Endothelial cell of umbilical vein (primary cell): ENCODE measurements at regions of chr4 and their contacts with region 1.

Region 1: GRCh38 chr4:185358514-185358913 is 37.2 kb downstream of the LRP2BP start:
- DNase-seq: peak; percentile 92
- H3K4me3 ChIP-seq: no peak overlapping the region
- H3K27ac ChIP-seq: peak overlapping the region; percentile 100
- H3K4me1 ChIP-seq: peaks cover 31% of the 10 kb centered on the region
- H3K27me3 ChIP-seq: no peaks in the 10 kb centered on the region
- CTCF ChIP-seq: no peak
- POLR2A ChIP-seq: no peak

Region 2: DNA sequence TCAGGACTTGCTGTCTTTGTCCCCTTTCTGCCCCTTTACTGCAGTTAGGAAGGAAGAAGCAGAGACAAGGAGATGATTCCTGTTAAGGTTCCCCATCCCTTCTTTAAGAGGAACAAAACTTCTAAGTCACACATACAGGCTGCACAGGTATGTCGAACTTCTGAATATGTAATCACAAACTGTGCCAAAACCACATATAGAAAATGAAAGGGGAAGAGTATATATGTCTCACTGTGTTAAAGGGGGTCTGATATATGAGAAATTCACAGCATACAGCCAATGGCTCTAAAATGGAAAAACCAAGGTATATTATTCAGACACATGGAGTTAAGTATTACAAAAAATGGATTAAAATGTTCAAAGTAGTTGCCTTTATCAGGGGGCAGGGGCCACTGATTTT is 166.5 kb before region 1 on chr4:
- CTCF ChIA-PET with region 1: no interaction called
- POLR2A ChIA-PET with region 1: no interaction called
- dilution Hi-C with region 1: no loop called
- intact Hi-C with region 1: no loop called
- DNase-seq: no peak
- H3K4me3 ChIP-seq: no peak overlapping the region
- H3K27ac ChIP-seq: no peak overlapping the region
- H3K4me1 ChIP-seq: no peaks in the 10 kb centered on the region
- H3K27me3 ChIP-seq: no peaks in the 10 kb centered on the region
- CTCF ChIP-seq: no peak
- POLR2A ChIP-seq: no peak

Region 3: GRCh38 chr4:185343726-185344581 is 14.6 kb before region 1 on chr4:
- CTCF ChIA-PET with region 1: interaction called, 5 read pairs
- POLR2A ChIA-PET with region 1: no interaction called
- dilution Hi-C with region 1: no loop called
- intact Hi-C with region 1: loop called (anchors 1 kb)
- DNase-seq: peak; percentile 57
- H3K4me3 ChIP-seq: no peak overlapping the region
- H3K27ac ChIP-seq: peak overlapping the region; percentile 62
- H3K4me1 ChIP-seq: peaks cover 19% of the 10 kb centered on the region
- H3K27me3 ChIP-seq: no peaks in the 10 kb centered on the region
- CTCF ChIP-seq: no peak
- POLR2A ChIP-seq: no peak

Region 4: DNA sequence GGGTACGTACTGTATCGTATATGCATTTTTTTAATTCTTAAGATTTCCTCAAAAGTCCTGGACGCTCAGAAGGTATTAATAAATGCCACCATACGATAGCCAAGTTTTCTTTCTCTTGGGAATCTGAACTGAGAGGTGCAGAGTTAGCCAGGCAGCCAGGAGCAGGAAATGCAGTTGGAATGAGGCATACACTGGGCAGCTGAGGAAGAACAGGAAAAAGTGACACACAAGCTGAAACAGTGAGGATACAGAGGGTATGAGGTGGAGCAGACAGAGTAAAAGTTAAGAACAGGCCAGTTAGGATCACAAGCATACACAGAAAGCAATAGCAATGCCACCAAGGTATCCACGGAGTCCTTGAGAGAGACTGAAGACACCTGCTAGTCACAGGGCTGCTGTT is 53.9 kb after region 1 on chr4:
- CTCF ChIA-PET with region 1: no interaction called
- POLR2A ChIA-PET with region 1: no interaction called
- dilution Hi-C with region 1: no loop called
- intact Hi-C with region 1: no loop called
- DNase-seq: peak; percentile 88
- H3K4me3 ChIP-seq: no peak overlapping the region
- H3K27ac ChIP-seq: peak overlapping the region; percentile 87
- H3K4me1 ChIP-seq: peaks cover 21% of the 10 kb centered on the region
- H3K27me3 ChIP-seq: no peaks in the 10 kb centered on the region
- CTCF ChIP-seq: no peak
- POLR2A ChIP-seq: no peak